ENCODE measurements at regions of chr5 and their contacts with region 1.

Region 1: GRCh38 chr5:95961617-95962474 is at the start of gene ELL2:
- DNase-seq: peak; percentile 90 to 99 (median 96)

Region 2: GRCh38 chr5:95486191-95486590 is 475.7 kb before region 1 on chr5:
- intact Hi-C with region 1: no loop called
- DNase-seq: no peak

Region 3: DNA sequence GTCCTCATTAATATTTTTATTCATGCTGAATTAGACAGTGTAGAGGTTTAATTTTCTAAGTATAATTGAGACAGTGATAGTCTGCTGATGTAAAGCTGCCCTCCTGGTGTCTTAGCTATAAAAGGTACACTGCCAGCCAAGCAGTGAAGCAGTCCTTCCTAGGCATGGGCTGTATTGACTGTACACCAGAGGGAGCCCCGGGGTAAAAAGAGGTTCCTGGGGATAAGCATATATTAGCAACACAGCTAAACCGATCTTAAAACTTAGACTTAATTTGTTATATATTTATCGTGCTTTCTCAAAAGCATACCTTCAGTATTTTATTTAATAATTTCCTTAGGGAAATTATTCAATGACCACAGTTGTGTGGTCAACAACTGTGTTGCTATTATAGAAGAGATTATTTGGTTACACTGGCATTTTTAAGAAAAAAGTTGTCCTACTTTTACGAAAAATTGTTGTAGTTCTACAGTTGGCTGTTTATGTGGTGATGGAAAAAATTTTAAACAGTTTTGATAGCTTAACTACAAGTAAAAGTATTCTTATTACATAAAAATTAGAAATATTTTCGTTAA is 69.0 kb before region 1 on chr5:
- intact Hi-C with region 1: loop called (anchors 5 kb)
- DNase-seq: peak in 4 of 10 donors; percentile 28 to 73 (median 44)

Region 4: GRCh38 chr5:96336351-96336985 is 374.6 kb after region 1 on chr5:
- intact Hi-C with region 1: loop called (anchors 5 kb)
- DNase-seq: peak in 7 of 10 donors; percentile 15 to 86 (median 56)